Heart left ventricle (tissue), 16 donors: ENCODE measurements at regions of chr16 and their contacts with region 1.

Region 1: DNA sequence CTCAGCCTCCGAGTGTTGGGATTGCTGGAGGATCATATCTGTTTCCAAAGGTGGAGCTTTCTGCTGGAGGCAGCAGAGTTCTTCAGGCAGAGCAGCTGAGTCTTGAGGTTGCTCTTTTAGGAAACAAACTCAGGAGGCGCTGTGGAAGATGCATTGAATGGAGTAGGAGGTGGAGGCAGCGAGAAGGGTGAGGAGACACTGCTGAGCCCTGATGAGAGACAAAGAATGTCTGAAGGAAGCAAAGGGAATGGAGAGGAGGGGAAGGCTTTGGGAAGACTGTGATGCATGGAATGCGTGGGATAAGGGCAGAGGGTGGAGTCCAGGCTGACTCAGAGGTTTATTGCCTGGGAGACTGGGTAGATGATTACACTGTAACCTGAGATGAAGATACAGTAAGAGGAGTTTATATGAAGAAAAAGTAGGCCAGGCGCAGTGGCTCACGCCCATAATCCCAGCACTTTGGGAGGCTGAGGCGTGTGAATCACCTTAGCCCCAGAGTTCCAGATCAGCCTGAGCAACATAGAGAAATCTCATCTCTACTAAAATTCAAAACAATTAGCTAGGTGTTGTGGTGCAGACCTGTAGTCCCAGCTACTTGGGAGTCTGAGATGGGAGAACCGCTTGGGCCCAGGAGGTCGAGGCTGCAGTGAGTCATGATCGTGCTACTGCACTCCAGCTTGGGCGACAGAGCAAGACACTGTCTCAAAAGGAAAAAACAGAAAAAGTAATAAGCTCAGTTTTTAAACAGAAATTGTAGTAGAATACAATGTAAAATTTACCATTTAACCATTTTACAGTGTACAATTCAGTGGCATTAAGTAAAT is 17.8 kb upstream of the TMEM219 start:
- DNase-seq: no peak
- ATAC-seq: peak; percentile 58 to 97 (median 76)
- H3K4me3 ChIP-seq: no peak overlapping the region
- H3K27ac ChIP-seq: peak overlapping the region in 3 of 12 donors; percentile 2 to 24 (median 4)
- H3K4me1 ChIP-seq: no peaks in the 10 kb centered on the region
- H3K27me3 ChIP-seq: no peaks in the 10 kb centered on the region
- CTCF ChIP-seq: no peak
- POLR2A ChIP-seq: no peak

Region 2: DNA sequence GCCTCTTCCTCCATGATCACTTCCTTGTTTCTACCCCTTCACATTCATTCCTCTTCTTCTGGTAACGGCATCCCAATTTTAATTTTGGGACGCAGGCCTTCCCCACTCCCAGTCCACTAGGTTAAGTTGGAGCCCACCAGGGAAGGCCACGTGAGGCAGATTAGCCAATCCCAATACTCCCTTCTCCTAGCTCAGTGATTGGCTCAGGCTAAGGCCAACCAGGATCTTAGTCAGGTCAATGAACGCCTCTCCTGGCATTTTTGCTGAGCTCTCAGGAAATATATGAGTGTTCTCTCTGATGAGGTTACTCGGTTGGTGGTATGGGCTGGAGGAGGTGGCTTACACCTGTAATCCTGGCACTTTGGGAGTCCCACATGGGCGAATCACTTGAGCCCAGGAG is 60.1 kb before region 1 on chr16:
- intact Hi-C with region 1: loop called in 1 of 10 experiments (anchors 10 kb)
- DNase-seq: no peak
- ATAC-seq: no peak
- H3K4me3 ChIP-seq: no peak overlapping the region
- H3K27ac ChIP-seq: no peak overlapping the region
- H3K4me1 ChIP-seq: no peaks in the 10 kb centered on the region
- H3K27me3 ChIP-seq: peaks cover 0 to 13% (median 2%) of the 10 kb centered on the region in 9 donors
- CTCF ChIP-seq: no peak
- POLR2A ChIP-seq: no peak

Region 3: DNA sequence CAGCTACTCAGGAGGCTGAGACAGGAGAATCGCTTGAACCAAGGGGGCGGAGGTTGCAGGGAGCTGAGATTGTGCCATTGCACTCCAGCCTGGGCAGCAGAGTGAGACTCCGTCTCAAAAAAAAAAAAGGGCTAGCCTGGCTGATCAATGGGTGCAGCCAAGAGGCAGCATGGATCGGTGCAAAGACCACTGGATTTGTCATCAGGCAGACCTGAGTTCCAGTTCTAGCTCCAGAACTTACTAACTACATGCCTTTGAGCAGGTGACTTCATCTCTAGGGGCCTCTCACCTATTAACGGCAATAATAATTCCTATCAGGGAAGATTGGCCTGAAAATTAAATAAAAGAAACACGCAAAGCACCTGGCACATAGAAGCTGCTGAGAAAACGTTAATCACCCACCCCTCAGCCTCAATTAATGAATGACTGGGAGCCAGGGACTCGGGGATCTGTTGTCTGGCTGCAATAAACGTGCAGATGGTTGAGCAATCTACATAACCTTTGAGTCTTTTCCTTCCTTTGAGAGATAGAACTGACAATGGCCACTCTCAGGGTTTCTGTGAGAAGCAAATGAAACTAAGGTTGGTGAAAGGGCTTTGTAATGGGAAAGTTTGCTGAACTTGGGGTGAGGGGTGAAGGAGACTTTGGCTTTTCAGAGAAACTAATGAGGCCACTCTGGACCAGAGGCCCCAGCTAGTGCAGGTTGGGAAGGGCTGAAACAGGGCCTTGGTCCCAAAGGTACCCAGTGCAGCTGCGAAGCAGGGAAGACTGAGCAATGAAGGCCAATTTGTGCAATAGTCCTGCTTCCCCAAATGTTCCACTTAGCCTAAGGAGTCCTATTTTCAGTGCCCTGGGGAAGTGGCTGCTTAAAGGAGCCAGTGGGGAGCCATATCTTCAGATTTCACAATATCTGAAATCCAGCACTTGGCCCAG is 52.3 kb before region 1 on chr16:
- intact Hi-C with region 1: loop called in 2 of 10 experiments (anchors 5 to 10 kb)
- DNase-seq: no peak
- ATAC-seq: peak in 1 of 4 donors; percentile 39
- H3K4me3 ChIP-seq: no peak overlapping the region
- H3K27ac ChIP-seq: no peak overlapping the region
- H3K4me1 ChIP-seq: no peaks in the 10 kb centered on the region
- H3K27me3 ChIP-seq: peaks cover 0 to 3% (median under 1%) of the 10 kb centered on the region in 9 donors
- CTCF ChIP-seq: no peak
- POLR2A ChIP-seq: no peak